Thyroid gland (tissue), 4 donors: ENCODE measurements at regions of chr9 and their contacts with region 1.

Region 1: DNA sequence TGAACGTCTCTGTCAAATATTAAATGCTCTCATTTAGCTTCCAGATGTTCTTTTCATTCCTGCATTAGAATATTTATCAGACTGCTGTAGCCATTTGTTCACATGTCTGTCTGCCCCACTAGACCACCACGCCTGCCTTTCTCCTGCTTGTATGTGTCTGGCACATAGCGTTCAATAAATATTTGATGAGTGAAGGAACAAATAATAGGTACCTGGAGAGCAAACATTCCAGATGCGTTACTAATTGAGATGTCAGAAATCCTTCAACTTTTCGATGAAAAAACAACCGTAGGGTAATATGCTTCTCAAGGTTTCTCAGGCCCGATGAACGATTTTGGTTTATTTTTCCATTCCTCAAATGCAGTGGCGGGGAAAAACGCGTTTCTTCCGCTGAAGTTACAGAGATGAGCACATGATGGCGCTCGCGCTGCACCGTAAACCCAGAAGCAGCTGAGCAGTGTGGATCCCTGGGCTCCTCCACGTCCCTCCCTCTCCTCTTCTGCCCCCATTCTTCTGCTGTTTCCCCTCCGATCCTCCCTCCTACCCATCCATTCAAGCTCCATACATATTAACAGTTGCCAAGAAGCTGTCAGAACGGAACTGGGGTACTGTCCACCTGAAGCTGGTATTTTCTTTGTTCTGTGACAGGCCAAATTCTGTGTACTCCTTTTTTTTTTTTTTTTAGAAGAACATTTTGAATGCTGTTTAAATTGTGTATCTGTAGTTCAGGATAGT is 245.4 kb downstream of the MPDZ start:
- DNase-seq: peak; percentile 52 to 69
- H3K4me3 ChIP-seq: no peak overlapping the region
- H3K27ac ChIP-seq: no peak overlapping the region
- H3K4me1 ChIP-seq: peaks cover 0 to 3% of the 10 kb centered on the region in 2 donors
- H3K27me3 ChIP-seq: no peaks in the 10 kb centered on the region
- CTCF ChIP-seq: peak; percentile 23 to 78 (median 56)
- POLR2A ChIP-seq: no peak

Region 2: DNA sequence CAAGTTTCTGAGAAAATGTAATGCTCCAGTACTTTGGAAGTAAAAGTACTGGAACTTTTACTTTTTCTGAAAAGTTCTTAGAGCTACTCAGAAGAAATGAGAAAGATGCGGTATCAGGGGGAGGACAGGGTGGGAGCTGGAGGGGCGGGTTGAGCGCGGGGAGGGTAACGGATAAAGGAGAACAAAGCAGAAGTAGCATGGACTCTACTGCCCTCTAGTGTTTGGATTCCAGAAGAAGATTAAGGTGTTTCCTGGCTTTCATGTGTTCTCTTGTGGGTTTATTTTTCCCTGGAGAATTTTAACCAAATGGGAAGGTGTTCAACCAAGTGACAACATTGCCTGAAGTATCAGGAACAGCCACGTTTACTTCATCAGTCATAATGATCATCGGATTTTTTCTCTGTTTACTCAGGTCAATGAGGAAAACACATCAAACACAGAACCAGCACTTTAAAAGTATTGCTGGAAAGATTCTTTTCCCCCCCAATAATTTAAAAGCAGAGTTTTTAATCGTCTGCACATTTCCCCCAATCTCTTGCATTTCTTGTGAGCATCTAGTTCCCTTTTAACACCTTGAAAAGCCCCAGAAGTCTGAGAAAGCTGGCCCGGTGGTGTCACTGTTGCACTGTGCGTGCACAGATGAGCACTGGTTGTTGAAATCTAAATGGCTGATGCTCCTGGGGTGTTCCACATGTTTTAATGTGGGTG is 54.7 kb after region 1 on chr9:
- intact Hi-C with region 1: loop called (anchors 5 kb)
- DNase-seq: no peak
- H3K4me3 ChIP-seq: no peak overlapping the region
- H3K27ac ChIP-seq: no peak overlapping the region
- H3K4me1 ChIP-seq: no peaks in the 10 kb centered on the region
- H3K27me3 ChIP-seq: no peaks in the 10 kb centered on the region
- CTCF ChIP-seq: peak; percentile 20 to 73 (median 54)
- POLR2A ChIP-seq: no peak